ENCODE measurements at regions of chr6 and their contacts with region 1.

Region 1: DNA sequence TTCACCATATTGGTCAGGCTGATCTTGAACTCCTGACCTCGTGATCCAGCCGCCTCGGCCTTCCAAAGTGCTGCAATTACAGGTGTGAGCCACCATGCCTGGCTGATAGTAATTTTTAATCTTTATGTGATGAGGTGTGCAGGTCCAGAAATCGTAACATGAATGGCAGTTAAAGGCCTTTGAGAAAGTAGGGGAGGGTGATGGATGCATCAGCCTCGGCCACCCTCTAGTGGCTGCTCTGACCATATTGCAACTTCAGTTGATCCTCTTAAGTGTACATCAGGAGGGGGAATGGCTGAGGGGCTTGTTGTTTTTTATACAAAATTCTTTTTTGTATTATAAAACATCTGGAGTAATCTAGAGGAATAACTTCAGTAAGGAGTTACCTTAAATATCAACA is 193.0 kb downstream of the ZFAND3 start:
- DNase-seq: no peak

Region 2: DNA sequence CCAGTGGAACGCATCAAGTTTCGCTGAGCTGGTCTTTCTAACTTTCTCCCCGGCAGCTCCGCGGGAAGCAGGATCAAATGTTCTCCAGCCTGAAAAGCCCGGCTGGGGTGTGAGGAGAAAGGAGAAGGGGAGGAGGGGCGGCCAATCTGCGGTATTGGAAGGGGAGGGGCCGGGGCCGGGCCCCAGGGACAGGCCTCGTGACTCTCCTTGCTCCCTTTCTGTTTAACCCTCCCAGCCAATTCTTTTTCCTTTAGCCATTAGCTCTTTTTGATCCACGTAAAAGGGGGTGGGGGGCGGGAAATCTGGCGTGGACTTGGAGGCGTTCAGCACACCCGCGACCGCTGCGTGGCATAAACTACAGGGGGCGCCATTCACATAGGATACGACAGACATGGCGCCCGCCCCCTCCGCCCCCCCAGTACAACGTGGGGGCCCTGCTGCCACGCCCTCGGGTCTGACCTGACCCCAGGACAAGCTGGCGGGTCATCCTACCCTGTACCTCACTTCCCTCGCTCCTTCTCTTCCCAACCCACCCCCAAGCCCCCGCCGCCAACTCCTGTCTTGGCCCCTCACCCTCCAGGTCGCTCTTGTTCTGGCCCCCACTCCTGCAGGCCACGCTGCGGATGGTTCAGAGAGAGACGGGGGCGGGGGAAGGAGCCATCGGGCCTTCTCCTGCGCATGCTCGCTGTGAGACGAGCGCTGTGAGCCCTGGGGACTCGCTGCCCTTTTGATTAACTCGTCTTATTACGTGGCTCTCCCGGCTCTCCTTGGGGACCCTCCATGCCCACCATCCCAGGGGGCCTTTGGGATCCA is 307.1 kb before region 1 on chr6:
- intact Hi-C with region 1: loop called (anchors 5 kb)
- DNase-seq: peak; percentile 89

Region 3: DNA sequence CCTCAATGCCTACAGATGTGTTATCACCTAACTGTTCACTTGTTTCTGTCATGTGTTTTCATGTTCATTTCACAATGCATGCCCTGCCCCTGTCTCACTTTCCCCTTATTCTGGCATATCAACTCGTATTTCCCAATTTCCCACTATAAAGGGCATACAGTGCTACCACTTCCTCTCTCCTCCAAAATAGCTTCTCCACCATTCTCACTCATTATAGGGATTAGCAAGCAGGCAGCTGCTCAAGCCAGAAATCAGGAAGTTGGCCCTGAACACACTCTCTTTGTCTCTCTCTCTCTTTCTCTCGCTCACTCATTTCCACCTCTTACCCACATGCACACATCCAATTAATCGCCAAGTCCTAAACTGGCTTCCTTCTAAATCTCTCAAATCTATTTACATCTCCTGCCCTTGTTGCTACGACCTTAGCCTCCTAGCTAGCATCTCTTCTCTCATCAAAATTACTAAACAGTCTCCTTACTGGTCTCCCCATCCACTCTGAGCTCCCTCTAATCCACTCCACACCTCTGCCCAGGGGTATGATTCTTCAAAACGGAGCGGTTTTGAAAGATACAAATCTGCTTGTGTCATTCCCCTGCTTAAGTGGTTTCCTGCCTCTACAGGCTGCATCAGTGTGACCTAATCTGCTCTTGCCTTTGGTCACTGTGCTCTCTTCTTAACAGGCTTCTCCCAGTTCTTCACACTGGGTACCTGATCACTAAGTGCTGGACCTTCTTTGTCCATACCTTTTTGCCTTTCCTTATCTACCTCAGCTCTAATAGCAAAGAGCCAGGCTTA is 431.0 kb after region 1 on chr6:
- intact Hi-C with region 1: no loop called
- DNase-seq: no peak